CD4-positive, alpha-beta T cell (primary cell): ENCODE measurements at regions of chr18 and their contacts with region 1.

Region 1: GRCh38 chr18:46097801-46098615 is at the start of gene ATP5F1A:
- DNase-seq: peak; percentile 76 to 93 (median 82)
- ATAC-seq: peak; percentile 84
- H3K4me3 ChIP-seq: peak within 1 kb of the TSS; percentile 82
- H3K4me3 Mint-ChIP-seq: peak within 1 kb of the TSS; percentile 100
- H3K27ac ChIP-seq: peak within 1 kb of the TSS; percentile 74 to 77
- H3K27ac Mint-ChIP-seq: peak within 1 kb of the TSS; percentile 99
- H3K4me1 ChIP-seq: peaks cover 41% of the 10 kb centered on the region
- H3K4me1 Mint-ChIP-seq: peaks cover 34% of the 10 kb centered on the region
- H3K27me3 ChIP-seq: no peaks in the 10 kb centered on the region
- H3K27me3 Mint-ChIP-seq: no peaks in the 10 kb centered on the region
- CTCF ChIP-seq: no peak
- total RNA-seq, gene ATP5F1A: 205 to 206 TPM

Region 2: GRCh38 chr18:45920367-45920766 is 177.6 kb before region 1 on chr18:
- CTCF ChIA-PET with region 1: no interaction called
- POLR2A ChIA-PET with region 1: no interaction called
- intact Hi-C with region 1: loop called in 1 of 2 experiments (anchors 5 kb)
- DNase-seq: peak in 4 of 14 experiments; percentile 8 to 25 (median 17)
- ATAC-seq: no peak
- H3K4me3 ChIP-seq: no peak overlapping the region
- H3K4me3 Mint-ChIP-seq: no peak overlapping the region
- H3K27ac ChIP-seq: no peak overlapping the region
- H3K27ac Mint-ChIP-seq: no peak overlapping the region
- H3K4me1 ChIP-seq: peaks cover 7% of the 10 kb centered on the region
- H3K4me1 Mint-ChIP-seq: peaks cover 18% of the 10 kb centered on the region
- H3K27me3 ChIP-seq: no peaks in the 10 kb centered on the region
- H3K27me3 Mint-ChIP-seq: no peaks in the 10 kb centered on the region
- CTCF ChIP-seq: no peak

Region 3: GRCh38 chr18:45967007-45967706 is 130.9 kb before region 1 on chr18 and contains the start of gene EPG5:
- CTCF ChIA-PET with region 1: no interaction called
- POLR2A ChIA-PET with region 1: no interaction called
- intact Hi-C with region 1: loop called in 1 of 2 experiments (anchors 2 kb)
- DNase-seq: peak; percentile 80 to 96 (median 87)
- ATAC-seq: peak; percentile 92
- H3K4me3 ChIP-seq: peak within 1 kb of the TSS; percentile 70
- H3K4me3 Mint-ChIP-seq: peak within 1 kb of the TSS; percentile 99
- H3K27ac ChIP-seq: peak within 1 kb of the TSS; percentile 65 to 68
- H3K27ac Mint-ChIP-seq: peak within 1 kb of the TSS; percentile 86
- H3K4me1 ChIP-seq: peaks cover 30% of the 10 kb centered on the region
- H3K4me1 Mint-ChIP-seq: peaks cover 50% of the 10 kb centered on the region
- H3K27me3 ChIP-seq: no peaks in the 10 kb centered on the region
- H3K27me3 Mint-ChIP-seq: no peaks in the 10 kb centered on the region
- CTCF ChIP-seq: no peak
- total RNA-seq, gene EPG5: 25.3 to 26.9 TPM

Region 4: GRCh38 chr18:46393230-46393629 is 295.2 kb after region 1 on chr18:
- CTCF ChIA-PET with region 1: no interaction called
- POLR2A ChIA-PET with region 1: no interaction called
- intact Hi-C with region 1: no loop called
- DNase-seq: no peak
- ATAC-seq: no peak
- H3K4me3 ChIP-seq: no peak overlapping the region
- H3K4me3 Mint-ChIP-seq: no peak overlapping the region
- H3K27ac ChIP-seq: no peak overlapping the region
- H3K27ac Mint-ChIP-seq: no peak overlapping the region
- H3K4me1 ChIP-seq: no peaks in the 10 kb centered on the region
- H3K4me1 Mint-ChIP-seq: no peaks in the 10 kb centered on the region
- H3K27me3 ChIP-seq: no peaks in the 10 kb centered on the region
- H3K27me3 Mint-ChIP-seq: no peaks in the 10 kb centered on the region
- CTCF ChIP-seq: no peak